Naive thymus-derived CD4-positive, alpha-beta T cell (primary cell): ENCODE measurements at regions of chr11 and their contacts with region 1.

Region 1: DNA sequence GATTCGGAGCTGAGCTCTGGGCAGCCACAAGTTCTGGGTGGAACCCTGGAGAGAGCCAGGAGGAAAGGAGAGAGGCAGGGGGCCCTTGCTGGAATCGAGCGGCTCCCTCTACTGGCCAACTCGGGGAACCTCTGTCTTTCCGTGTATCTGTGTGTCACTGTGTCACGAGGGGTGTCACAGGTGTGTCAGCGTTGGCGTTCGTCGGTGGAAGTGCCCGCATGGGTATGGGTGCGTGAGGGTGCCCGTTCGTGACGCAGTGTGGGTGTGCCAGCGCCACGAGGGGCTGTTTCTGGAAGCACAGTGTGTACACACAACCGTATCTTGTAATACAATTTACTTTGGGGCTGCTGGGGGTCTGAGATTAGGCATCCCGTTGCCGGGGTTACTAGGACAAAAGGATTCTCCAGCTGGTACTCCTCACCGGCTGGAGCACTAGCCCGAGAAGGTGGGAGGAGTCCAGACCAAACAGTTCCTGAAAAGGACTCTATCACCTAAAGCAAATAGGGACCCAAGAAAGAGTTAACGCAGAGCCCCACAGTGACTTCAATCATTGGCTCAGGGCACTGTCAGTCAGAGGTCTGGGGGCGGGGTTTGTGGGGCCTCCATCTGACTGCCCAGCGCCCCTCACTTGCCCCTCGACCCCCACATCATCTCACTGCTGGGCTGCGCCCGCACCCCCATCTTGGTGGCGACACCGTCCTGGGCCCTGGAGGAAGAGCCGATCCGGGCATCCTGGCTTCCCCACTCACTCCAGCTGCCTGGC is 2.6 kb upstream of the BCL9L start:
- DNase-seq: peak; percentile 89 to 99 (median 97)
- ATAC-seq: peak; percentile 79
- H3K4me3 ChIP-seq: peak overlapping the region; percentile 81
- H3K4me3 Mint-ChIP-seq: peak overlapping the region; percentile 86 to 98 (median 95)
- H3K27ac ChIP-seq: peak overlapping the region; percentile 96
- H3K27ac Mint-ChIP-seq: peak overlapping the region; percentile 93 to 100 (median 99)
- H3K4me1 ChIP-seq: peaks cover 25 to 34% of the 10 kb centered on the region in 2 donors
- H3K4me1 Mint-ChIP-seq: peaks cover 30 to 56% (median 46%) of the 10 kb centered on the region in 7 donors
- H3K27me3 ChIP-seq: no peaks in the 10 kb centered on the region
- H3K27me3 Mint-ChIP-seq: peaks cover 0 to 2% (median 0%) of the 10 kb centered on the region in 5 donors

Region 2: DNA sequence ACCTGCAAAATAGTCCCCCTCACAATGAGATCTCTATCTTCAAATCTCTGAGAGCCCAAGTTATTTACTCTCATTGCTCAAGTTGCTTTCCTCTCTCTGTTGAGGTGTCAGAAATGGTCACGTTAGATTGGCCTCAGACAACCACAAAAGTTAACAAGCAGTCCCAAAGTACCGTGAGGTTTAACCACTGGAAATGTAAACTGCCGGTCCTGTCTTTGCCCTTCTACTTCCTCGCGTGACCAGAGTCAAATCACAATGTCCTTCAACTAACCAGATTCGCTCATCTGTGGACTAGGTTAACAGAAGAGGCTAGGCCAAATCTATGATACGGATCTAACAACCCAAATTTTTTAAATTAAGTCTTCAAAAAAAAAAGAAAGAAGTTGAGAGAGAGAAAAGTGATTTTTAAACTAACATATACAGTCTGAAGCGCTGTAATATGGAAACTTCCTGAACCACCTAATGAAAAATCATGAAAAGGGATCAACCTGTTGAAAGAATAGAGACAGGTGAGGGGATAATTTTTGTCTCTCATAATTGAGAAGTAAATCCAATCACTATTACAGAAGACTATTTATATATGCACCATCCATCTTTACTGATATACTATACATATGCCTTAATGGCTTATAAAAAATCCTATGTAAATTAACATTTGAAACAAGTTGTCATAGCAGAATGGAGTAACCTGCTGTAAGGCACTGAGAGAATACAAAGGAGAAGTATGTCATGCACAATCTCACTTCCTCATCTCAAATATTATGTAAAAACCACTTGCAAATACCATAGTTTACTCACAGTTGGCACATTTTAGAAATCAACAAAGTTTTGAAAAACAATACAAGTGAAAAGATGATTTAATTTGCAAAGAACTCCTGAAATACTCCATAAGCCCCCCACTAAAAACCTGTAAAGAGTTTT is 700.2 kb before region 1 on chr11:
- CTCF ChIA-PET with region 1: no interaction called
- POLR2A ChIA-PET with region 1: no interaction called
- intact Hi-C with region 1: loop called in 1 of 2 experiments (anchors 5 kb)
- DNase-seq: peak in 4 of 9 donors; percentile 23 to 49 (median 41)
- ATAC-seq: peak; percentile 34
- H3K4me3 ChIP-seq: peak overlapping the region; percentile 4
- H3K4me3 Mint-ChIP-seq: peak overlapping the region in 9 of 10 donors; percentile 3 to 77 (median 66)
- H3K27ac ChIP-seq: peak overlapping the region; percentile 61
- H3K27ac Mint-ChIP-seq: peak overlapping the region in 1 of 9 donors; percentile 91
- H3K4me1 ChIP-seq: peaks cover 59 to 70% of the 10 kb centered on the region in 2 donors
- H3K4me1 Mint-ChIP-seq: peaks cover 10 to 55% (median 46%) of the 10 kb centered on the region in 7 donors
- H3K27me3 ChIP-seq: no peaks in the 10 kb centered on the region
- H3K27me3 Mint-ChIP-seq: no peaks in the 10 kb centered on the region

Region 3: DNA sequence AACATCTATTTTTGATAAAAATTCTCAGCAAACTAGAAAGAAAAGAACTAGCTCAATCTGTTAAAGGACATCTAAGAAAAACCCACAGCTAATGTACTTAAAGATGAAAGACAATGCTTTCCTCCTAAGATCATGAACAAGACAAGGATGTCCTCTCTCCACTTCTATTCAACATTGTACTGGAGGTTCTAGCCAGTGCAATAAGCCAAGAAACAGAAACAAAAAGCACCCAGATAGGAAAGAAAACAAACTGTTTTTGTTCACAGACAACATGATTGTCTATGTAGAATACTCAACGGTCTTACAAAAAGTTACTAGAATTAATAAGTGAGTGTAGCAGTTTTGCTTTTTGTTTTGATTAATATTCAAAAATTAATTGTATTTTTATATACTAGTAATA is 593.5 kb before region 1 on chr11:
- CTCF ChIA-PET with region 1: no interaction called
- POLR2A ChIA-PET with region 1: no interaction called
- intact Hi-C with region 1: no loop called
- DNase-seq: peak in 7 of 9 donors; percentile 36 to 66 (median 52)
- ATAC-seq: peak; percentile 39
- H3K4me3 ChIP-seq: no peak overlapping the region
- H3K4me3 Mint-ChIP-seq: peak overlapping the region in 9 of 10 donors; percentile 7 to 84 (median 73)
- H3K27ac ChIP-seq: peak overlapping the region; percentile 96
- H3K27ac Mint-ChIP-seq: peak overlapping the region; percentile 64 to 97 (median 95)
- H3K4me1 ChIP-seq: peaks cover 38 to 52% of the 10 kb centered on the region in 2 donors
- H3K4me1 Mint-ChIP-seq: peaks cover 20 to 62% (median 48%) of the 10 kb centered on the region in 7 donors
- H3K27me3 ChIP-seq: no peaks in the 10 kb centered on the region
- H3K27me3 Mint-ChIP-seq: no peaks in the 10 kb centered on the region

Region 4: DNA sequence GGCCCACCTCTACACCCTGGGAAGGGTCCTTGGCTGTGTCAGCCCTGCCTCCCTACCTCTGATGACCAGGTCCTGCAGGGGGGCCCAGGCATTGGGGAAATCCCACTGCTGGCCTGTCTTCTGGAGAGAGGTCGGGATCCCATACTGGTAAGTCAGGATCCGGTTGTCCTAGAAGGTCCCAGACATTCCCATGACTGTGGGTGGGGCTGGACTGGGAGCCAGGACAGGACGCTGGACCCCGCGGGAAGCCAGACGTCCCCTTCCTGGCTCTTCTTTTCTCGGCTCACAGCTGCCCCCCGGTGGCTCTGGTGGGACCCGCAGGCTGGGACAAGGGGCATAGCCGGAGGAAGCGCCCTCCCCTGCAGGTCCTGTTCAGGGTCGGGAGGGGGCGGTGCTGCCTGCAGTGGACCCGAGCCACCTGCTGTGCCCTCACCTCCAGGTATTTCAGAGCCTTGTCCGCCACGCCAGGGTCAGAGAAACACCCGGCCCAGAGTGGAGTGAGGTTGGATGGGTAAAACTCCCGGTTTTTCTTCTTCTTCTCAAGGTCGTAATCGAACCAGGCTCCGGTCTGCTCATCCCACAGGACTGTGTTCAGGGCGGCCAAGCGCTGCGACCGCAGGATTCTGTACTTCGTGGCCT is 268.9 kb before region 1 on chr11:
- CTCF ChIA-PET with region 1: no interaction called
- POLR2A ChIA-PET with region 1: no interaction called
- intact Hi-C with region 1: loop called in 1 of 2 experiments (anchors 1 kb)
- DNase-seq: peak; percentile 75 to 88 (median 84)
- ATAC-seq: peak; percentile 99
- H3K4me3 ChIP-seq: no peak overlapping the region
- H3K4me3 Mint-ChIP-seq: peak overlapping the region in 2 of 10 donors; percentile 56 to 64
- H3K27ac ChIP-seq: no peak overlapping the region
- H3K27ac Mint-ChIP-seq: peak overlapping the region in 1 of 9 donors; percentile 1
- H3K4me1 ChIP-seq: peaks cover 0 to 7% of the 10 kb centered on the region in 2 donors
- H3K4me1 Mint-ChIP-seq: peaks cover 0 to 12% (median 6%) of the 10 kb centered on the region in 7 donors
- H3K27me3 ChIP-seq: no peaks in the 10 kb centered on the region
- H3K27me3 Mint-ChIP-seq: no peaks in the 10 kb centered on the region

Region 5: GRCh38 chr11:118820412-118821357 is 107.6 kb before region 1 on chr11:
- CTCF ChIA-PET with region 1: no interaction called
- POLR2A ChIA-PET with region 1: no interaction called
- intact Hi-C with region 1: no loop called
- DNase-seq: no peak
- ATAC-seq: peak; percentile 55
- H3K4me3 ChIP-seq: no peak overlapping the region
- H3K4me3 Mint-ChIP-seq: peak overlapping the region in 2 of 10 donors; percentile 9 to 13
- H3K27ac ChIP-seq: no peak overlapping the region
- H3K27ac Mint-ChIP-seq: peak overlapping the region in 1 of 9 donors; percentile 25
- H3K4me1 ChIP-seq: no peaks in the 10 kb centered on the region
- H3K4me1 Mint-ChIP-seq: peaks cover 0 to 4% (median 0%) of the 10 kb centered on the region in 7 donors
- H3K27me3 ChIP-seq: no peaks in the 10 kb centered on the region
- H3K27me3 Mint-ChIP-seq: no peaks in the 10 kb centered on the region

Region 6: DNA sequence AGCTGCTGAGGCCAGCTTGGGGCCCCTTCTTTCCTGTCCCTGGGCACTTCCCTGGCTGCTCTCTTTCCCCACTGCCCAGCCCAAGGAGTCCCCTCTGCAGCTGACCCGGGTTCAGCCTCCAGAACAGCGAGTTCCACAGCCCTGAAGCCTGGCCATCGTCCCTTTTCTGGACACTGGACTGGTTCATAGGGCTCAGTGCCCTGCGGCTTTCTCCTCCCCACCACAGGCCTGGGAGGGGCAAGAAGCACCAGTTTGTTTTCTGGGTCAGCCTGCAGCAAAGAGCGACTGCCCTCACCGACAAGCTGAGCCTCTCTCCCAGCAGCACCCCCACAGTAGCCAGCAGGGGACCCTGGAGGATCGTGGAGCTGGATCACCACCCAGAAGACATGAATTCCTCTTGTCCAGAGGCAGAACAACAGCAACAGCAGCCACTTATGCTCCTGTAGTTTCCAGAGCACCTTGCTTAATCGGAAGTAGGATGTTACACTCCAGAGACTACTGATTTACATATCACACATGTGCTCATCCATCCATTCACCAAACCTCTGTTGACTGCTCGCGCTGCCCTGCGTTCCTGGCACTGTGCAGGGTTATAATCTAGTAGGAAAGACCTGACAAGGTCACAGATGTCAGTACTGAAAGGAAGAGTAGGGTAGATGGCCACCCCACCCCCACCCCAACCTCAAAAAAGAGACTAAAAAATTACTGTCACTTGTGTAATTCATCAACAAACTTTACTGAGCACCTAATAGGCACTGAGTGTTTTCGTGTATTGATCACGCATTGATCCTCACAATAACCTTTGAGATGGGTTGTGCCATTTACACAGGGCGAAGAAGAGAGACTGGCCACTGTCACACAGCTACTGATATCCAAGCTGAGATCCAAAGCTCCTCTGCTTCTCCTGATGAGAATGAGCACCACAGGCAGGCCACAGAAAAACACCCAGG is 57.6 kb before region 1 on chr11:
- CTCF ChIA-PET with region 1: interaction called, 3 read pairs
- POLR2A ChIA-PET with region 1: interaction called, 8 read pairs
- intact Hi-C with region 1: loop called (anchors 1 to 2 kb)
- DNase-seq: peak in 6 of 9 donors; percentile 44 to 54 (median 51)
- ATAC-seq: peak; percentile 28
- H3K4me3 ChIP-seq: peak overlapping the region; percentile 60
- H3K4me3 Mint-ChIP-seq: peak overlapping the region; percentile 67 to 91 (median 82)
- H3K27ac ChIP-seq: peak overlapping the region; percentile 94
- H3K27ac Mint-ChIP-seq: peak overlapping the region; percentile 94 to 100 (median 99)
- H3K4me1 ChIP-seq: peaks cover 51 to 58% of the 10 kb centered on the region in 2 donors
- H3K4me1 Mint-ChIP-seq: peaks cover 29 to 61% (median 57%) of the 10 kb centered on the region in 7 donors
- H3K27me3 ChIP-seq: no peaks in the 10 kb centered on the region
- H3K27me3 Mint-ChIP-seq: no peaks in the 10 kb centered on the region

Region 7: GRCh38 chr11:118918128-118918685 is 10.1 kb before region 1 on chr11:
- CTCF ChIA-PET with region 1: no interaction called
- POLR2A ChIA-PET with region 1: no interaction called
- intact Hi-C with region 1: loop called (anchors 1 kb)
- DNase-seq: peak in 6 of 9 donors; percentile 13 to 75 (median 60)
- ATAC-seq: peak; percentile 14
- H3K4me3 ChIP-seq: peak overlapping the region; percentile 57
- H3K4me3 Mint-ChIP-seq: peak overlapping the region; percentile 86 to 99 (median 95)
- H3K27ac ChIP-seq: peak overlapping the region; percentile 96
- H3K27ac Mint-ChIP-seq: peak overlapping the region; percentile 91 to 100 (median 100)
- H3K4me1 ChIP-seq: peaks cover 66 to 90% of the 10 kb centered on the region in 2 donors
- H3K4me1 Mint-ChIP-seq: peaks cover 57 to 79% (median 70%) of the 10 kb centered on the region in 7 donors
- H3K27me3 ChIP-seq: no peaks in the 10 kb centered on the region
- H3K27me3 Mint-ChIP-seq: no peaks in the 10 kb centered on the region

Region 8: DNA sequence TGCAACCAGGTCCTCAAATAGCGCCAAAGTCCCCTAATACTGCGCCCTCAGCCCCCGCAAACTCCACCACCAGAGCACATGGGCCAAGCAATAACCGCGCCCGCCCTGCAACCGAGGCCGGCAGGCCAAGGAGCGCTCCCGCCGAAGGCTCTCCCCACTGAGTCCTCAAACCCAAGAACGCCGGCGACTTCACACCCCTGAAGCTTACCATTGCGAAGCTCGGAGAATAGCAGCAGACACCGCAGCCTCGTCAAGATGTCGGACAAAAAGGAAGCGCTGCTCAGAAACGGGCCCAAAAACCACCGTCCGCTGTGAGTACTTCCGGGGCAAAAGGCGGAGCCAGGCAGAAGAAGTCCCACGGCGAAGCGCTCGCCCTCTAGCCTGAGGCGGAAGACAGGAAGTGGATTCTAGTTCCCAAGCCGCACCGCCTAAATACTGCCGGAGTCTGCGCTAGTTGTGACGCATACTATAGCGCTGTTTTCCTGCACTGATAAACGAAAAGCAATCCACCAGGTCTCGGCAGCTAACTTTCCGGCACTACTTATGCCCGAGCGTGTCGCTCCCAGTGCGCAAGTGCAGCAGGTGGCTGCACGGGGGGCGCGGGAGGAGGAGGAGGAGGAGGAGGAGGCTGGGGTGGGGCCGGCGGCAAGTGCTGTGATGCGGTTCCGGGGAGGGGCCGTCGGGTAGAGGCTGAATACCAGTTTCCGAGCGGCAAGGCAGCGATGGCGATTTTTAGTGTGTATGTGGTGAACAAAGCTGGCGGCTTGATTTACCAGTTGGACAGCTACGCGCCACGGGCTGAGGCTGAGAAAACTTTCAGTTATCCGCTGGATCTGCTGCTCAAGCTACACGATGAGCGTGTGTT is 90.0 kb after region 1 on chr11 and contains the starts of genes RPS25 and TRAPPC4:
- CTCF ChIA-PET with region 1: no interaction called
- POLR2A ChIA-PET with region 1: no interaction called
- intact Hi-C with region 1: loop called (anchors 1 kb)
- DNase-seq: peak; percentile 87 to 98 (median 96)
- ATAC-seq: peak; percentile 93
- H3K4me3 ChIP-seq: peak within 1 kb of the TSS; percentile 89
- H3K4me3 Mint-ChIP-seq: peak within 1 kb of the TSS; percentile 96 to 100 (median 98)
- H3K27ac ChIP-seq: peak within 1 kb of the TSS; percentile 98
- H3K27ac Mint-ChIP-seq: peak within 1 kb of the TSS; percentile 99 to 100 (median 100)
- H3K4me1 ChIP-seq: peaks cover 30 to 32% of the 10 kb centered on the region in 2 donors
- H3K4me1 Mint-ChIP-seq: peaks cover 21 to 75% (median 50%) of the 10 kb centered on the region in 7 donors
- H3K27me3 ChIP-seq: no peaks in the 10 kb centered on the region
- H3K27me3 Mint-ChIP-seq: no peaks in the 10 kb centered on the region
- total RNA-seq, gene RPS25: 1,535 to 3,042 (median 2,772) TPM
- total RNA-seq, gene TRAPPC4: 70.7 to 80.3 (median 77.8) TPM

Region 9: GRCh38 chr11:120363436-120363835 is 1435.1 kb after region 1 on chr11:
- CTCF ChIA-PET with region 1: no interaction called
- POLR2A ChIA-PET with region 1: no interaction called
- intact Hi-C with region 1: no loop called
- DNase-seq: no peak
- ATAC-seq: no peak
- H3K4me3 ChIP-seq: no peak overlapping the region
- H3K4me3 Mint-ChIP-seq: no peak overlapping the region
- H3K27ac ChIP-seq: no peak overlapping the region
- H3K27ac Mint-ChIP-seq: no peak overlapping the region
- H3K4me1 ChIP-seq: no peaks in the 10 kb centered on the region
- H3K4me1 Mint-ChIP-seq: peaks cover 0 to 2% (median 0%) of the 10 kb centered on the region in 7 donors
- H3K27me3 ChIP-seq: peaks cover 0 to 3% of the 10 kb centered on the region in 2 donors
- H3K27me3 Mint-ChIP-seq: peaks cover 11 to 33% (median 17%) of the 10 kb centered on the region in 5 donors